ENCODE measurements at regions of chr17 and their contacts with region 1.

Region 1: GRCh38 chr17:5399767-5400166 is 19.7 kb downstream of the NUP88 start:
- DNase-seq: no peak

Region 2: DNA sequence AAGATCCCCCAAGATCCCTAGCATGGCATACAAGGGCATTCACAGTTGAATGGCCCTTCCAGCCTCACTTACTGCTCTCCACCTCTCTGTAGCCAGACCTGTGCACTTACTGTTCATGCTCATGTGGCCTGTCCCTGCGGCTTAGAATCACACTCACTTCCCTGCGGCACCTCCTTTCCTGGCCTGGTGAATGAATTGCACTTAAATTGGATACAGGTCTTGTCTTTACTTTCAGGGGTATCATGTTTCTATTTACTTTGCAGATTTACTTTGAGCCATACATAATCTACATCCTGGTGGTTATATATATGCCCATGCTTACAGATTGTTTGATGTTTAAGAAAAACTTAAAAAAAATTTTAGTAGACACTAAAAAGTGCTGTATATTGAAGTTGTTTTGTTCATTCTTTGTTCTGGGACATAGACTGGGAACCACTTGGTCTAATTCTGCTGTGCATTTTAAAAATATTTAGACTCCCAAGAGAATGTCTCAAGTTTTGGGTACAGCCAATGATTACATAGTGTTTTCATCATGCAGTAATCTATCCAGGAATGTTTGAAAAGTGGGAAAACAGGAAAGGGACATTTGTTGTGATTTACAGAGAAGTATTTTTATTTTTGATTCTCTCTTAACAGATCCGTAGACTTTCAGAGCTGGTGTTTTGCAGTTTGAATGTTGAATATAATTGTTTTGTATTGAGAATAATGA is 44.2 kb before region 1 on chr17:
- intact Hi-C with region 1: loop called in 1 of 2 experiments (anchors 2 kb)
- DNase-seq: no peak

Measured in posterior vena cava (tissue), 2 donors.